ENCODE measurements at regions of chrX and their contacts with region 1.

Region 1: DNA sequence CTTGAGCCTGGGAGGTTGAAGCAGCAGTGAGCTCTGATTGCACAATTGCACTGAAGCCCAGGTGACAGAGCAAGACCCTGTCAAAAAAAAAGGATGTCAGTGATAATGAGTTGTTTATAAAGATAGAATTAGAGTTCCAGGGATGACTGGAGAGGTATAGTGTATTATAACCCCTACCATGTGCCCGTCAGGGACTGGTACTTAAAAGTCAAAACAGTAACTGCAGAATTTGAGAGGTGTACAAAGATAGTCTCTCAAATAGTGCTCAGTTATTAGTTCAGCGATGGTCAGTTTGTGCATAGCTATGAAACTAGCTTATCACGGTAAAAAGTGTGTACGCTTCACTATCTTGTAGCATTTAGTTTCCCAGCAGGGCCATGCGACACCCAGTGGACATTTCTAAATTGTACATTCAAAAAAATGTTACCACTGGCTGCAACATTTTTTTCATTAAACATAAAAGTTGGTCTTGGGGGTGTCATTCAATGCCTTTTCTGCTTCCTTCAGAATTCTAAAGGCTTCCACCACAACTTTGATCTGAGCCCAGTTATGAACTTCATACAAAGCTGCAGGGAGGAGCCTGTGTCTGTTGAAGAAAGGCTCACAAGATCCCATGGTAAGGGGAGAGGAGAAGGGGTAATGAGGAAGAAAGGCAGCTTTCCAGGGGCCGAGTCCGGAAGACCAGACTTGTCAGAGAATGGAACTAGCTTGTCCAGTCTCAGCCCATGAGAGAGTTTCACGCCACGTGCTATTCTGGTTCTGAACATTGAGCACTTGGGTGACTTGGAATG is 9.2 kb upstream of the GYG2 start:
- DNase-seq: peak; percentile 52
- H3K4me3 Mint-ChIP-seq: no peak overlapping the region
- H3K27ac Mint-ChIP-seq: no peak overlapping the region
- H3K4me1 Mint-ChIP-seq: no peaks in the 10 kb centered on the region
- H3K27me3 Mint-ChIP-seq: no peaks in the 10 kb centered on the region
- CTCF ChIP-seq: peak; percentile 53

Region 2: DNA sequence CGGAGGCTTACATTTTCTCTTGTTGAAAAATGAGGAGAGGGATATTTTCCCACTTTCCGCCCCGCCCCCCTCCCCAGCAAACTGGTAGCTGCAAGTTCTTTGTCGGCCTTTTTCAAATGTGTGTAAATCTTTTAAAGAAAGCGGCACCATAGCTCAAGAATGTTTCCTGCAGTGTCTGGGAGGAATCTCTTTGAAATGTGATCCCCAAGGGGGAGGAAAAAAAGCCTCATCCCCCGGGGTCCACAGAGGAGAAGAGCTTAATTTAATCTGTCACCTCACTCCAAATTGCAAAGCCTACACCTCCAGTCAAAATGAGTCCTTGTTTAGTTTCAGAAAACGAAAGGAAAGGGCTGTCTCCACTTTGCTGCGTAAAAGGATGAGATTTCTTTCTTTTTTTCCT is 1169.9 kb before region 1 on chrX:
- CTCF ChIA-PET with region 1: no interaction called
- POLR2A ChIA-PET with region 1: no interaction called
- intact Hi-C with region 1: loop called (anchors 1 kb)
- DNase-seq: no peak
- H3K4me3 Mint-ChIP-seq: no peak overlapping the region
- H3K27ac Mint-ChIP-seq: no peak overlapping the region
- H3K4me1 Mint-ChIP-seq: no peaks in the 10 kb centered on the region
- H3K27me3 Mint-ChIP-seq: no peaks in the 10 kb centered on the region
- CTCF ChIP-seq: no peak

Region 3: DNA sequence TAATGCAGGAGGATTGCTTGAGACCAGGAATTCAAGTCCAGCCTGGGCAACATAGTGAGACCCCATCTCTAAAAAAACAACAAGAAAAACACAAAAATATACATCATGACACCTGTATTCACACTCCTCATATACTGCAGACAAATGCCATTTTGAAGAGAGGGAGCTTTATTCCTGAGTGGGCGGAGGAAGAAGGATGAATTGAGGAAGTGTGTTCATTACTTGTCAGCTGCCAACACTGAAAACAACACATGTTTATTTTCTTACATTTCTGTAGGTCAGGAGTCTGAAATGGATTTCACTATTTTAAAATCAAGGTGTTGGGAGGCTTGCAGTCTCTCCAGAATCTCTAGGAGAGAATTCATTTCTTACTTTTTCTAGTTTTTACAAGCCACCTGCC is 175.7 kb before region 1 on chrX:
- CTCF ChIA-PET with region 1: no interaction called
- POLR2A ChIA-PET with region 1: no interaction called
- intact Hi-C with region 1: loop called (anchors 1 kb)
- DNase-seq: no peak
- H3K4me3 Mint-ChIP-seq: no peak overlapping the region
- H3K27ac Mint-ChIP-seq: no peak overlapping the region
- H3K4me1 Mint-ChIP-seq: no peaks in the 10 kb centered on the region
- H3K27me3 Mint-ChIP-seq: no peaks in the 10 kb centered on the region
- CTCF ChIP-seq: no peak

Region 4: DNA sequence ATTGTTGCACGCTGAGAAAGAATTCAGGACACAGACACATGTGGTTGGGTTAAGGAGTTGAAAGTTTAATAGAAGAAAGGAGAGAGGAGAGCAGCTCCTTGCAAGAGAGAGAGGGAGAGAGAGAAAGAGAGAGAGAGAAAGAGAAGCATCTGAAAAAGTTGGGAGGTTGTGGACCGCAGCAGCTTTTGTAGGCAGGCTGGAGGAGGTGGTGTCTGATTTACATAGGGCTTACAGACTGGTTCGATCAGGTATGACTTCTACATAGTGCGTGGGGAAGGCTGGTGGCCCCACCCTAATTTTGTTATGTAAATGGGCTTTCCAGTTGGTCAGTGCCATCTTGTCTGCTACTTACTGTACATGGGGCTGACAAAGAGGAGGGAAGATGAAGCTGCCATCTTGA is 18.3 kb before region 1 on chrX:
- CTCF ChIA-PET with region 1: interaction called, 17 read pairs
- POLR2A ChIA-PET with region 1: no interaction called
- intact Hi-C with region 1: no loop called
- DNase-seq: no peak
- H3K4me3 Mint-ChIP-seq: no peak overlapping the region
- H3K27ac Mint-ChIP-seq: no peak overlapping the region
- H3K4me1 Mint-ChIP-seq: no peaks in the 10 kb centered on the region
- H3K27me3 Mint-ChIP-seq: no peaks in the 10 kb centered on the region
- CTCF ChIP-seq: no peak

Region 5: DNA sequence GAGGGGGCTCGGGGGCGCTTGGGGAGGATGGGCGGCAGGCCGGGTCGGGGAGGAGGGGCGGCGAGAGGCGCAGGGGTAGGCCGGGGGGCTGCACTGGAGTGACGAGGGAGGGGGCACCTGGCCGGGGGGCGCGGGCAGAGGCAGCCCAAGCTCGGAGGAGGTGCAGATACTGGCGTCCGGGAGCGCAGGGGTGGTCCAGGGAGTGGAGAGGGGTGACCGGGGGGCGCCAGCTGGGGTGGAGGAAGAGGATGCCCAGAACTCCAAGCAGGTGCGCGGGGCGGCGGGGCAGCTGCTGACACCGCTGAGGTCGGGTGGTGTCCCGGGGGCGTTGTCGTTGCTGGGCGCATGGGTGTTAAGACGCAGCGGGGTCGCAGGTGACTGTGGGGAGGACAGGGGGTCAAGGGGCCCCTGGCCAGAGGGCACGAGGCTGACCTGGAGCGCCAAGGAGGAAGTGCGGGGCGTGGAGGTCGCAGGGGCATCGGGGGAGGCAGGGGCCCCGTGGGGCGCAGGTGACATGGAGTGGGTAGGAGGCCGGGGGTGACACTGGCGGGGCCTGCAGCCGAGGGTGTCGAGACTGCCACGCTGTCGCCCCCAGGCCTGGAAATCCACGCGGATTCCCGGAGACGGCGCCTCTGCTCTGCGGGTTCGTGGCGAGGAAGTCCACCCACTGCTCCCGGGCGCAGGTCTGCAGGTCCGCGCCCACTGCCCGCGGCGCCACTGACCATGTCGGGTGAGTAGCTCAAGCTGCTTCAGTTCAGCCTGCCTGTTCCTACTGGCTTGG is 10.1 kb after region 1 on chrX:
- CTCF ChIA-PET with region 1: interaction called, 10 read pairs
- POLR2A ChIA-PET with region 1: no interaction called
- intact Hi-C with region 1: no loop called
- DNase-seq: no peak
- H3K4me3 Mint-ChIP-seq: no peak overlapping the region
- H3K27ac Mint-ChIP-seq: no peak overlapping the region
- H3K4me1 Mint-ChIP-seq: no peaks in the 10 kb centered on the region
- H3K27me3 Mint-ChIP-seq: peaks cover 12% of the 10 kb centered on the region
- CTCF ChIP-seq: no peak

Region 6: GRCh38 chrX:2837961-2838360 is 18.4 kb after region 1 on chrX:
- CTCF ChIA-PET with region 1: interaction called, 12 read pairs
- POLR2A ChIA-PET with region 1: no interaction called
- intact Hi-C with region 1: no loop called
- DNase-seq: no peak
- H3K4me3 Mint-ChIP-seq: no peak overlapping the region
- H3K27ac Mint-ChIP-seq: no peak overlapping the region
- H3K4me1 Mint-ChIP-seq: no peaks in the 10 kb centered on the region
- H3K27me3 Mint-ChIP-seq: peaks cover 21% of the 10 kb centered on the region
- CTCF ChIP-seq: no peak